ENCODE measurements at regions of chr11 and their contacts with region 1.

Region 1: DNA sequence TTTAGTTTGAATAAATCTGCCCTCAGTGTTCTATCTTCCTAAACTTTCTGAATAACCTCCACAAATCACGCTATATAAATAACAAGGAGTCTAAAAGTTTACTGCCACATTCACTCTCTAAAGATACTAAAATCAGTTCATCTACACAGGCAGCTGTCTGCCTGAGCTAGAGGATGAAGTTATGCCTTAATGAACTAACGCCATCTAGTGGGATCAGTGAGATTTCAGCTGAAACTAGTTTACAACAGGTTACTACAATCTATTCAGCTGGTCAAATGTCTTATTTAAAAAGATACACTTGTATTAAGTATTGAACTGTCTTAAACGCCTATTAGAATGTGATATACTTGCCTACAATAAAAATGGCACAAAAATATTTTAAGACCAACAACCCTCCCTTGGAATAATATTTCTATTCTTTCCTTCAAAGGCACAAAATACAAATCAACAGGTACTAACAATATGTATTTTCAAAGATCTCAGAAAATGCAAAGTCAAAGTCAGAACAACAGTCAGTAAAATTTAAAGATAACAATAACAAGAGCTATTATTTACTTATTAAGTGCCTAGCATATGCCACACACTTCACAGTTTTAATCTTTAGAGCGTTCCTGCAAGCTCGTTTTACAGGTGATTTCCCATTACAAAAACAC is 84.1 kb downstream of the LARGE2 start:
- DNase-seq: no peak
- H3K4me3 Mint-ChIP-seq: no peak overlapping the region
- H3K27ac Mint-ChIP-seq: no peak overlapping the region
- H3K4me1 Mint-ChIP-seq: peaks cover 2% of the 10 kb centered on the region
- H3K27me3 Mint-ChIP-seq: no peaks in the 10 kb centered on the region

Region 2: DNA sequence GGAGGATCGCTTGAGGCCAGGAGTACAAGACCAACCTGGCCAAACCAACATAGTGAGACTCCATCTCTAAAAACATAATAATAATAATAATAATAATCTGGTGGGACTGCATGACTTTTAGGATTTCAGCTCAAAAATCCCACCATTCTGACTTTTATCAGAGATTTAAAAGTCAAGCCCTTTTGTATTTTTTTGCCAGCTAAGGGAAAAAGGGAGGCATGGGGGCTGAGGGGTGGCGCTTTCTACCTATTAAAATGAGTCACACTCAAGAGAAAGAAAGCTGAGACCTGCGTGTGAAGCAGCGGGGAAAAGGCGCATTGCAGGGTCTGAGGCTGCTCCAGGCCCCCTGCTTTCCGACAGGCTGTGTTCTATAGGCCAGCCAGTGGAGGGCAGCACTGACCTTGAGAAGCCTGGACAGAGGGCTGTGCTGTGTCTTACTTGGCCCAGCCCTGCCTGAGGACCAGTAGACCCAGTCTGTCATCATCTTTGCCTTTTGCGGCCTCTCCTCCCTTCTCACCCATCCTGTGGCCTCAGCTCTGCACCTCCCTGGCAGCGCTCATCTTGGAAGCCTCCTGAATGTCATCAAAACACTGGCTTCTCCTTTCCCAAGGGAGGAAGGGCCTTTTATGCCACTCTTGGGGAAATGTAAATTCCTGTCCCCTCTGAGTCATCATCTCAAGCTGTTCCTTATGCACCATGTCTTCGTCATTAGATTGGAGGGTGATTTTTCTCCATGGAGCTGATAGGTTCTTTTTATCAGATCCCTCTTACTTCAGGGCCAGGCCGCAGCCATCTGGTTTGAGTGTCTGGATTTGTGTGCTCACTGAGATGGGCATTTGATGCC is 133.8 kb before region 1 on chr11:
- CTCF ChIA-PET with region 1: interaction called, 14 read pairs
- POLR2A ChIA-PET with region 1: no interaction called
- intact Hi-C with region 1: loop called (anchors 1 kb)
- DNase-seq: peak; percentile 54
- H3K4me3 Mint-ChIP-seq: no peak overlapping the region
- H3K27ac Mint-ChIP-seq: no peak overlapping the region
- H3K4me1 Mint-ChIP-seq: no peaks in the 10 kb centered on the region
- H3K27me3 Mint-ChIP-seq: no peaks in the 10 kb centered on the region

Region 3: DNA sequence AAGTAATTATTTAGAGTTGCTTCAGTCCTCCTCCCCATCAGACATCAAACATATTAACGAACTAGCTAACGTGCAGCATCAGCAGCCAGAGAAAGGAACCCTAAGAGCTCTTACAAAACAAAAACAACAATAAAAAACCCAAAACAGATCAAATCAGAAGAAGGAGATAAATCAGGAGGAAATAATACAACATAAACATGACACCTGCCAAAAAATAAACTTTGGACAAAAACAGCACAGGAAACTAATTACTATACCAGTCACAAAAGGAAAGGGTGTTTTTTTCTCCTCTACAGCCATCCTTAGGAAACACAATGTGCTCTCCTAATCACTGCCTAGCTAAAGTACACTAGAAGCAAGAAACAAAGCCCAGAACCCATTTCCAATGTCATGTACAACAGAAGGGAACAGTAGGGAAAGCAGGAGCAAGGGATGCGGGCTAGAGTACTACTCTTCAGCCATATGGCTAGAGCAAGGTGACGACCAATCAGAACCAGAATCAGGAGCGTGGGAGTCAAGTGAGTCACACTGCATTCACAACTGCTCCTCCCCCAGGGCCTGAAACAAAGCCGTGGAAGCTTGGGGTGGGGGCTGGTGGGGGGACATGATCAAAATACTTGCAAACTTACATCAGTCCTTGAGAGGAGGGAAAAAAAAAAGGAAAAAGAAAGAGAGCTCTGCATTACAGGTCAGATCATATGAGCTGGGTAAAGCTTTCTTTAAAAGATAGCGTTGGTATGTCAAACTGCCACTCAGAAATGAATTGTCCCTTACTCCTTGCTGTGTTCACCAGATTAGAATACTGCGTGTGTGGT is 23.7 kb before region 1 on chr11:
- CTCF ChIA-PET with region 1: interaction called, 11 read pairs
- POLR2A ChIA-PET with region 1: no interaction called
- intact Hi-C with region 1: no loop called
- DNase-seq: peak; percentile 75
- H3K4me3 Mint-ChIP-seq: no peak overlapping the region
- H3K27ac Mint-ChIP-seq: peak overlapping the region; percentile 62
- H3K4me1 Mint-ChIP-seq: peaks cover 35% of the 10 kb centered on the region
- H3K27me3 Mint-ChIP-seq: no peaks in the 10 kb centered on the region

Region 4: GRCh38 chr11:45993531-45994001 is 13.0 kb before region 1 on chr11:
- CTCF ChIA-PET with region 1: interaction called, 25 read pairs
- POLR2A ChIA-PET with region 1: no interaction called
- intact Hi-C with region 1: no loop called
- DNase-seq: no peak
- H3K4me3 Mint-ChIP-seq: no peak overlapping the region
- H3K27ac Mint-ChIP-seq: no peak overlapping the region
- H3K4me1 Mint-ChIP-seq: peaks cover 21% of the 10 kb centered on the region
- H3K27me3 Mint-ChIP-seq: no peaks in the 10 kb centered on the region

Region 5: GRCh38 chr11:46017341-46017740 is 10.8 kb after region 1 on chr11:
- CTCF ChIA-PET with region 1: interaction called, 22 read pairs
- POLR2A ChIA-PET with region 1: no interaction called
- intact Hi-C with region 1: no loop called
- DNase-seq: no peak
- H3K4me3 Mint-ChIP-seq: no peak overlapping the region
- H3K27ac Mint-ChIP-seq: no peak overlapping the region
- H3K4me1 Mint-ChIP-seq: no peaks in the 10 kb centered on the region
- H3K27me3 Mint-ChIP-seq: no peaks in the 10 kb centered on the region